Activated naive CD4-positive, alpha-beta T cell treated with anti-CD3 and anti-CD28 coated beads for 36 hours (primary cell): ENCODE measurements at regions of chr2 and their contacts with region 1.

Region 1: DNA sequence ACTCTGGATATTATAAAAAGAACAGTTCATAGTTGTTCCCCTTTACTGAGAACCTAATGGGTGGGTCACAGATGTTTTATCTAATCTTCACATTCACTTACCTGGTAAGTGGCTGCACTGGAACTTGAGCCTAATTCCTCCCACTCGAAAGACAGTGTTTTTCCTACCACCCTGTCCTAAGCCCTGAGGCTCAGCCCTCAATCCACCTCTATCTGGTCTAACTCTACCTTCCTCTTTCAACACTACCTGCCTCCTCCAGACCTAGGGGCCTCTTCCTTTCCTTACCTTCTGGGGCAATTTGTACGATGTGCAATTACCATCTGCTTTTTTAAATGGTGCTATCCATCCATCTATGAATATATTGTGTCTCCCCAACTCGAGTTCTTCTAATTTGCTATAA is 9.7 kb upstream of the KIF3C start:
- DNase-seq: no peak
- H3K4me3 Mint-ChIP-seq: no peak overlapping the region
- H3K27ac Mint-ChIP-seq: no peak overlapping the region
- H3K4me1 Mint-ChIP-seq: peaks cover 6% of the 10 kb centered on the region
- H3K27me3 Mint-ChIP-seq: no peaks in the 10 kb centered on the region

Region 2: GRCh38 chr2:26068602-26069298 is 76.8 kb after region 1 on chr2:
- CTCF ChIA-PET with region 1: no interaction called
- intact Hi-C with region 1: loop called (anchors 1 kb)
- DNase-seq: peak; percentile 76
- H3K4me3 Mint-ChIP-seq: no peak overlapping the region
- H3K27ac Mint-ChIP-seq: peak overlapping the region; percentile 20
- H3K4me1 Mint-ChIP-seq: peaks cover 47% of the 10 kb centered on the region
- H3K27me3 Mint-ChIP-seq: no peaks in the 10 kb centered on the region

Region 3: GRCh38 chr2:26103752-26104151 is 111.8 kb after region 1 on chr2:
- CTCF ChIA-PET with region 1: no interaction called
- intact Hi-C with region 1: no loop called
- DNase-seq: no peak
- H3K4me3 Mint-ChIP-seq: no peak overlapping the region
- H3K27ac Mint-ChIP-seq: no peak overlapping the region
- H3K4me1 Mint-ChIP-seq: peaks cover 9% of the 10 kb centered on the region
- H3K27me3 Mint-ChIP-seq: no peaks in the 10 kb centered on the region

Region 4: GRCh38 chr2:26144953-26145680 is 153.2 kb after region 1 on chr2:
- CTCF ChIA-PET with region 1: interaction called, 35 read pairs
- intact Hi-C with region 1: loop called (anchors 1 kb)
- DNase-seq: peak; percentile 82
- H3K4me3 Mint-ChIP-seq: no peak overlapping the region
- H3K27ac Mint-ChIP-seq: no peak overlapping the region
- H3K4me1 Mint-ChIP-seq: no peaks in the 10 kb centered on the region
- H3K27me3 Mint-ChIP-seq: peaks cover 2% of the 10 kb centered on the region

Region 5: DNA sequence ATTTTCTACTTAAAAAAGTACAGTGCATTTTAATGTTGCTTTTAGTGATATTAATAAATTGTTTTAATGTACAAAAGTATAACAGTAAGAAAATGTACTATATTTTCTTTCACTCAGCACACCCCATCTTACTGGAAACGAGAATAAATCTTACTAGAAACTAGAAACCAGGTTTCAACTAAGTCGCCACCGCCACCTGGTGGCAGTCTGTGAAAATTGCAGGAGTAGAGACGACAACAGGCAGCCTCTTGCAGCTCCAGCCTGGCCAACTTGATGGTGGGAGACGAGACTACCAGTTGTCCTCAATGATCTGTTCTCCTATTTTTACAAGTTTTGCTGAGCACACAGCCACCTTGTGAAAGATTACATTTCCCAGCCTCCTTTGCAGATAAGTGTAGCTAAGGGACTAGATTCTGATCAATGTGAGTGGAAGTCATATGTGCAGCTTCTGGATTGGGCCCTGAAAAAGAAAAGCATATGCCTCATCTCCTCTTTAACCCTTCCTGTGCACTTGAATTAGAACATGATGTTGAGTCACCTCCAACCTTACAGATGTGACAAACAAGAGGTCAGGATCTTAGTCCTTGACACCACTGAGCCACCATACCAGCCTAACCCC is 477.2 kb after region 1 on chr2:
- CTCF ChIA-PET with region 1: no interaction called
- intact Hi-C with region 1: loop called (anchors 2 kb)
- DNase-seq: peak; percentile 88
- H3K4me3 Mint-ChIP-seq: no peak overlapping the region
- H3K27ac Mint-ChIP-seq: no peak overlapping the region
- H3K4me1 Mint-ChIP-seq: peaks cover 2% of the 10 kb centered on the region
- H3K27me3 Mint-ChIP-seq: no peaks in the 10 kb centered on the region